ENCODE measurements at regions of chr2 and their contacts with region 1.

Region 1: GRCh38 chr2:241659150-241659739 is 21.8 kb downstream of the ATG4B start:
- DNase-seq: peak in 1 of 2 donors; percentile 43
- ATAC-seq: peak; percentile 23 to 39
- H3K4me3 ChIP-seq: no peak overlapping the region
- H3K27ac ChIP-seq: no peak overlapping the region
- H3K4me1 ChIP-seq: no peaks in the 10 kb centered on the region
- H3K27me3 ChIP-seq: no peaks in the 10 kb centered on the region
- CTCF ChIP-seq: peak in 2 of 5 experiments; percentile 36 to 43
- POLR2A ChIP-seq: no peak

Region 2: GRCh38 chr2:240851078-240851991 is 807.9 kb before region 1 on chr2:
- in situ Hi-C with region 1: no loop called
- intact Hi-C with region 1: loop called (anchors 2 kb)
- DNase-seq: peak; percentile 56 to 80
- ATAC-seq: peak; percentile 93 to 99
- H3K4me3 ChIP-seq: no peak overlapping the region
- H3K27ac ChIP-seq: no peak overlapping the region
- H3K4me1 ChIP-seq: no peaks in the 10 kb centered on the region
- H3K27me3 ChIP-seq: no peaks in the 10 kb centered on the region
- CTCF ChIP-seq: peak; percentile 77 to 96 (median 93)
- POLR2A ChIP-seq: no peak